ENCODE measurements at regions of chrX and their contacts with region 1.

Region 1: DNA sequence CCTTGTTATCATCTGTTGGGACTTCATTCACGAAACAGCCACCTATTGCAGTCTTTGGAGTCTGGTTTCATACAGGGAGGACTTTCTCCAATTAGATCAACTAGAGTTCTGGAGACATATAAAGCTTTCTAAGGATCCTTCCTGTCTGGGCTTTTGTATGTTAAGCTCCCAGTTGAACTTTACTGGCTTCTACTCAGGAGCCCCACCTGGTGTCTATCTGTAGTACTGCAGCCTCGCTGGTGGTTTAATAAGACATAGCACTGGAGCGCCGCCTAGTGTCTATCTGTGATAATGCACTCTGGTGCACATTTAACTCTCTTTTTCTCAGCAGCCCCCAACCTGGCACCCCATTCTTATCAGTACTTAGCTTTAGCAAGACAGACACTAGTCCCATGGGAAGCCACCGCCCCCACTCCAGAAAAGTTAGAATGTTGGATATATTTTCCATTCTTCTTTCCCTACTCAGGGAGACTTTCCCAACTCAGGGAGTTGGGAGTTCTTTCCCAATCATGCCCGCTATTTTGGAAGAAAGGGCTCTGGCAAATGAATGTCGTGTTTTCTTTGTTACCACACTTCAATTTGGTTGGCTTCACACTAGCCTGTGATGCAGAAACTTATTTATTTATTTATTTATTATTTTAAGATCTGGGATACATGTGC is 36.9 kb upstream of the SYTL4 start:
- DNase-seq: peak; percentile 56 to 92 (median 75)
- ATAC-seq: peak; percentile 58 to 93 (median 64)
- H3K4me3 ChIP-seq: no peak overlapping the region
- H3K4me3 Mint-ChIP-seq: no peak overlapping the region
- H3K27ac ChIP-seq: no peak overlapping the region
- H3K27ac Mint-ChIP-seq: no peak overlapping the region
- H3K4me1 ChIP-seq: no peaks in the 10 kb centered on the region
- H3K4me1 Mint-ChIP-seq: no peaks in the 10 kb centered on the region
- H3K27me3 ChIP-seq: no peaks in the 10 kb centered on the region
- H3K27me3 Mint-ChIP-seq: peaks cover 6 to 22% of the 10 kb centered on the region in 2 donors

Region 2: DNA sequence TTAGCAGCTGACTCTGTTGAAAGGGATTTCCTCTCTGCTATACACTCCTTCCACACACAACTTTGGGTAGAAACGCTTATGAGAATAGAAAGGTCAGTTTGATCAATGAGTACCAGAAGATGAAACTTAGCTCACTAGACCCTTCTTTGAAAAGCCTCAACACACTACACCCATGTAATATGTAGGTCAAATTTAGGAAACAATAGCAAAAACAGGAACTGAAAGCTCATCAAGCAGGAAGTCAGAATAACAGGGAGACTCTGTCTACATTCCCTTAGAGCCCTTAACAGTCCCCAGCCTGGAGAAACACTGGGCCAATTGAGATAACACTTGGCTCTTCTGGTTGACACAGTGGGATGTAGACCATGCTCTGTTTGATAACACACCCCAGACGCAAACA is 94.1 kb before region 1 on chrX:
- CTCF ChIA-PET with region 1: interaction called, 3 to 11 read pairs
- POLR2A ChIA-PET with region 1: no interaction called
- DNase-seq: no peak
- ATAC-seq: peak in 1 of 4 experiments; percentile 12
- H3K4me3 ChIP-seq: no peak overlapping the region
- H3K4me3 Mint-ChIP-seq: no peak overlapping the region
- H3K27ac ChIP-seq: no peak overlapping the region
- H3K27ac Mint-ChIP-seq: no peak overlapping the region
- H3K4me1 ChIP-seq: no peaks in the 10 kb centered on the region
- H3K4me1 Mint-ChIP-seq: peaks cover 0 to 19% (median 12%) of the 10 kb centered on the region in 3 donors
- H3K27me3 ChIP-seq: no peaks in the 10 kb centered on the region
- H3K27me3 Mint-ChIP-seq: peaks cover 0 to 25% of the 10 kb centered on the region in 2 donors

Region 3: GRCh38 chrX:100685284-100685996 is 83.4 kb before region 1 on chrX:
- CTCF ChIA-PET with region 1: interaction called, 7 to 15 read pairs
- POLR2A ChIA-PET with region 1: no interaction called
- DNase-seq: peak in 33 of 35 experiments; percentile 18 to 71 (median 38)
- ATAC-seq: peak in 3 of 4 experiments; percentile 43 to 62 (median 61)
- H3K4me3 ChIP-seq: no peak overlapping the region
- H3K4me3 Mint-ChIP-seq: no peak overlapping the region
- H3K27ac ChIP-seq: no peak overlapping the region
- H3K27ac Mint-ChIP-seq: no peak overlapping the region
- H3K4me1 ChIP-seq: no peaks in the 10 kb centered on the region
- H3K4me1 Mint-ChIP-seq: peaks cover 0 to 13% (median 2%) of the 10 kb centered on the region in 3 donors
- H3K27me3 ChIP-seq: peaks cover 0 to 2% of the 10 kb centered on the region in 2 experiments
- H3K27me3 Mint-ChIP-seq: peaks cover 0 to 11% of the 10 kb centered on the region in 2 donors

Region 4: GRCh38 chrX:100804780-100805179 is 36.0 kb after region 1 on chrX:
- CTCF ChIA-PET with region 1: no interaction called
- POLR2A ChIA-PET with region 1: no interaction called
- DNase-seq: no peak
- ATAC-seq: no peak
- H3K4me3 ChIP-seq: no peak overlapping the region
- H3K4me3 Mint-ChIP-seq: no peak overlapping the region
- H3K27ac ChIP-seq: no peak overlapping the region
- H3K27ac Mint-ChIP-seq: no peak overlapping the region
- H3K4me1 ChIP-seq: no peaks in the 10 kb centered on the region
- H3K4me1 Mint-ChIP-seq: no peaks in the 10 kb centered on the region
- H3K27me3 ChIP-seq: no peaks in the 10 kb centered on the region
- H3K27me3 Mint-ChIP-seq: peaks cover 21 to 26% of the 10 kb centered on the region in 2 donors

Region 5: GRCh38 chrX:101025126-101025525 is 256.3 kb after region 1 on chrX:
- CTCF ChIA-PET with region 1: no interaction called
- POLR2A ChIA-PET with region 1: no interaction called
- DNase-seq: no peak
- ATAC-seq: no peak
- H3K4me3 ChIP-seq: no peak overlapping the region
- H3K4me3 Mint-ChIP-seq: no peak overlapping the region
- H3K27ac ChIP-seq: no peak overlapping the region
- H3K27ac Mint-ChIP-seq: no peak overlapping the region
- H3K4me1 ChIP-seq: no peaks in the 10 kb centered on the region
- H3K4me1 Mint-ChIP-seq: peaks cover 0 to 13% (median 3%) of the 10 kb centered on the region in 3 donors
- H3K27me3 ChIP-seq: no peaks in the 10 kb centered on the region
- H3K27me3 Mint-ChIP-seq: no peaks in the 10 kb centered on the region